Heart right ventricle (tissue), 16 donors: ENCODE measurements at regions of chr11 and their contacts with region 1.

Region 1: DNA sequence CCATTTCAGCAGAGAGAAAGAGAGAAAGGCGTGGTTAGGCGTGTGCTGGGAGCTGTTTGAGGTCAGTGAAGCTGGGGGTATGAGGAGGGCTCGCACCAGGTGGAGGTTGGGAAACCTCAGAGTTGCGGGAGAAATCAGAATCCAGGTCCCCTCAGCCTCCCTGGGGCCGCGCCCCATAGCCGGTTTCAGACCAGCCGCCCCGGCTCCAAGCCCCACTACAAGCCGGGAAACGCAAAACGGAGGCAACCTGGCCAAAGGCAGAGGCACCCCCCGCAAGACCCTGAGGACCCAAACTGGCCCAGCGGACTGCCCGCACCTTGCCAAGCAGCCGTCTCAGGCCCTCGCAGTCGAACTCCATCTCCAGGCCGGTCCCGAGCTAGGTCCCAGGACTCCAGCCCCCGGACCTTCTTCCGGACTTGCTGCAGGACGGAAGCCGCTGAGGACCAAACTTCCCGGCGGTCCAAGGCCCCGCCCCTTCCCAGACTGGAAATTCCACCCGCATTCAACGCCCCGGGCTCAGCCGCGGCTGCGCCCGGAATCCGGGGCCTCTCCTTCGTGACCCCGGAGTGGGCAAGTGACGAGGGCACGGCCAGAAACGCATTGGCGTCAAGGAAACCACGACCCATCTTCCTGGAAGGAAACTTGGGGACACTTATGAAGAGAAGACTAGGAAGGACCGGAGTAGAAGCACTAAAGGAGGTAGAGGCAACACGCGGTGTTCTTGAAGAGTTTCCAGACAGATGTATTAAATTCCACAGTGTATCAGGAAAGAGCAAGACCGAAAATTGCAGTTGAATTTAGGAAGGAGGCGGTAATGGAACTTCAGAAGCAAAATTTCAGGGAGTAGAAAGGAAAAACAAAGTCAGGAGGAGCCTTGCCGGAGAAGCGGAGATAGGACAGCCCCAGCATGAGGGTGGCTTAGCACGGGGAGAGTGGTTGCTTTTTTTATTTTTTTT is at the start of gene UEVLD:
- DNase-seq: peak; percentile 89 to 93
- ATAC-seq: peak; percentile 96 to 99 (median 99)
- H3K4me3 ChIP-seq: peak within 1 kb of the TSS; percentile 70 to 98 (median 86)
- H3K27ac ChIP-seq: peak within 1 kb of the TSS; percentile 71 to 92 (median 87)
- H3K4me1 ChIP-seq: peaks cover 0 to 48% (median 35%) of the 10 kb centered on the region in 9 donors
- H3K27me3 ChIP-seq: no peaks in the 10 kb centered on the region
- CTCF ChIP-seq: no peak
- total RNA-seq, gene UEVLD: 13.7 to 25.8 (median 18.6) TPM

Region 2: DNA sequence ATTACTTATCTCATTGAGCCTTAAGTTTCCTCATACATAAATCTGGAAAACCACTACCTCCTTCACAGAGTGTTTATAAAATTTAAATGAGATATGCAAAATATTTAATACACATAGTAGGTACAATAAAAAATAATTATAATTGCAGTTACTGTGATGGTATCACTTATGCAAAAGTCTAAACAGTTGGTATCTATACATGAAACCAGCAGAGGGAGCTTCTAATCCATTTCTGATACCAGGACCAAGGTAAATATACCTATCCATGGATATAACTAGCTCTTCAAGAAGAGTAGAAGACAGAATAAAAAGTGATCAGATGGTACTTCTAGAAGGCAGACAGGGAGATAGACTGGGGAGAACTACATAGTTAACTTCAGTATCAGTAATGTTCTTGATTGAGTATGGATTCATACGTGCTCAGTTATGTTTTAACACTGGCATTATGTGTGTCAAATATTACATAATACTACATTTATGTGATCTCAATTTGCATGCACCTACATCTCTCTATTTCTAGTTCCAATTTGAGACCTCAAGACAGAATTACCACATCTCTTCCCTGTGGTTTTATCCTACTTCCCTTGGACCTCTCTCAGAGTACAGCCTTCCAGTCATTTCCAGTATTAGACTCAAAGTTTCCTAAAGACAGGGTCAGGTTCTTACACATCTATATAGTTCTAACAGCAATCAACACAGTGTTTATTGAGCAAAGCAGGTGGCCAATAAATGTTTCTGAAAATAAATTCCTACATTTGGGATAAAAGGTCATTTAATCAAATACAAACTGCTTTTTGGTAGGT is 48.2 kb before region 1 on chr11:
- intact Hi-C with region 1: loop called in 1 of 10 experiments (anchors 10 kb)
- DNase-seq: no peak
- ATAC-seq: no peak
- H3K4me3 ChIP-seq: no peak overlapping the region
- H3K27ac ChIP-seq: no peak overlapping the region
- H3K4me1 ChIP-seq: no peaks in the 10 kb centered on the region
- H3K27me3 ChIP-seq: no peaks in the 10 kb centered on the region
- CTCF ChIP-seq: peak in 7 of 9 donors; percentile 18 to 56 (median 47)

Region 3: DNA sequence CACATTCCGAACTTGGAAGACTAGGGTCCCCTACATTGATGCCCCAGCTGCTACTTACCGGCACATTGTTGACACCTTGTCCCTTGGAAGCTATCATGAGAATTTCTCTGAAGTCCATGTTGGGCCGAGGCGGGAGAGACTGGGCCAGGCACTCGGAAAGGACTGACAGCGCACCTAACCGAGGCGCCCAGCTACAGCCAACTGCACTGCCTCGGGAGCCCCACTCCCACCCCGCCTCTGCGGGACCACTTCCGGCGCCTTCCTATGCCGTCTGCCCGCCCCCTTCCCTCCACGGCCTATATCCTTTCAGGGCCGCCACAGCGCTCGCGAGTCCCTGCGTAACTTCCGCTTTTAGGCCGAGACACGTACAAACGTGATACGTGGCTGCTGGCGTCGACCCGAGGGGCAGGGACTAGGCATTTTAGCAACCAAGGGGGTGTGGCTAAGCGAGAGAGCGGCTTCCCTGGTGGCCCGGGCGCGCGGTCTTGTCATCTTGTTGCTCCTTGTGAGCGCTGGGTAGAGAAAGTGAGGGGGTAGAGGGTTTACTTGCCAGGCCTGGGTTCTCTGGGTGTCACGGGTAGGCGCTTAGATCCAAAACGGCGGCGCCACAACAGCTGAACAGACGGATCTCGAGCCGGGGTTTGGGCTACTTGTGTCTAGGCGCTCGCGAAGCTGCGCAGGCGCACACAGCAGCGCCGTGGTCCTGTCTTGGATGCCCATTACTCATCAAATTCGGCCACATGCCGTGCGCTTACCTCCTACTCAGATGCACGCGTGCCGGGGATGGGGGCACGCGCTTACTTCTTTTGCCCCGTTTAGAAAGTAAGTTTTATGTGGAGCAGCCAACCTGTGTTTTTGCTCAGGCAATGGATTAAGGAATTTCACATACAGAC is 45.8 kb after region 1 on chr11 and contains the start of gene SPTY2D1:
- intact Hi-C with region 1: loop called in 6 of 10 experiments (anchors 1 to 10 kb)
- DNase-seq: peak; percentile 99 to 100
- ATAC-seq: peak; percentile 99 to 100 (median 100)
- H3K4me3 ChIP-seq: peak within 1 kb of the TSS; percentile 65 to 96 (median 81)
- H3K27ac ChIP-seq: peak within 1 kb of the TSS; percentile 83 to 96 (median 94)
- H3K4me1 ChIP-seq: peaks cover 4 to 37% (median 13%) of the 10 kb centered on the region in 9 donors
- H3K27me3 ChIP-seq: no peaks in the 10 kb centered on the region
- CTCF ChIP-seq: peak in 2 of 9 donors; percentile 14 to 20
- total RNA-seq, gene SPTY2D1: 7.3 to 18.8 (median 10.2) TPM

Region 4: DNA sequence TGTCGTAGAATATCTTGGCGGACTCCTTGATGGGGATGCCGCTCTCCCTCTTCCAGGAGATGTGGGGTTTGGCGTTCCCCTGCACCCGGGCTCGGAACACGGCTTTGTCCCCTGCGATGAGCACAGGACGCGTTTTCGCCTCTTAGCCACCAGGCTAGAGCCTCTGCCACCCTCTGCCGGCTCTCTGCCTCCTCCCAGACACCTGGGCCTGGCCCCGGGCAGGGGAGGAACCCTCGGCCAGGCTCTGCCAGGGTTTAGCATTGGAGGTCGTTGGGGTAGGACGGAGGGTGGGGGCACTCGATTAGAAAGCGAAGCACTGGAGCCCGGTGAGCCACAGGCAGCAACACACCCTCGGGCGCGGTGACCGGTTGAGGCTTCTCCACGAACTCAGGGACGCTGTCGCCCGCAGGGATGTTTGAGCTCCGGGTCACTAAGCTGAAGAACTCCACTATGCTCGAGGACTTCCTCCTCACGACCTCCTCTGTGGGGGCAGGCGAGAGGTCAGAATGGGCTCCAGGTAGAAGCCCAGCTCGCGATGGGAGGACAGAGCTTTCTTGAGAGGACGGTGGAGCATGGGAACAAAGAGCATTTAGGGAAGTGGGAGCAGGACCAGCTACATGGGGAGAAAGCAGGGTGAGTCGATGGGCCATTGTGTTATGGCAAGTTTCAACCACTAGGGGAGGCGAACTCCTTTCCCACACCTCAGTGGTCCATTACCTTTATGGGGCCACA is 133.2 kb after region 1 on chr11:
- intact Hi-C with region 1: loop called in 1 of 10 experiments (anchors 10 kb)
- DNase-seq: peak; percentile 26 to 40
- ATAC-seq: peak; percentile 54 to 83 (median 70)
- H3K4me3 ChIP-seq: peak overlapping the region; percentile 33 to 72 (median 61)
- H3K27ac ChIP-seq: peak overlapping the region in 9 of 10 donors; percentile 33 to 63 (median 47)
- H3K4me1 ChIP-seq: peaks cover 0 to 18% (median 10%) of the 10 kb centered on the region in 9 donors
- H3K27me3 ChIP-seq: no peaks in the 10 kb centered on the region
- CTCF ChIP-seq: peak; percentile 61 to 87 (median 71)

Region 5: GRCh38 chr11:18731949-18732821 is 143.6 kb after region 1 on chr11:
- intact Hi-C with region 1: loop called in 3 of 10 experiments (anchors 5 to 10 kb)
- DNase-seq: peak; percentile 23 to 48
- ATAC-seq: peak in 6 of 8 donors; percentile 45 to 67 (median 56)
- H3K4me3 ChIP-seq: no peak overlapping the region
- H3K27ac ChIP-seq: no peak overlapping the region
- H3K4me1 ChIP-seq: peaks cover 0 to 8% (median 0%) of the 10 kb centered on the region in 9 donors
- H3K27me3 ChIP-seq: peaks cover 0 to 9% (median 0%) of the 10 kb centered on the region in 7 donors
- CTCF ChIP-seq: peak; percentile 94 to 98 (median 95)